Head of caudate nucleus (tissue), 42 donors: ENCODE measurements at regions of chrX and their contacts with region 1.

Region 1: DNA sequence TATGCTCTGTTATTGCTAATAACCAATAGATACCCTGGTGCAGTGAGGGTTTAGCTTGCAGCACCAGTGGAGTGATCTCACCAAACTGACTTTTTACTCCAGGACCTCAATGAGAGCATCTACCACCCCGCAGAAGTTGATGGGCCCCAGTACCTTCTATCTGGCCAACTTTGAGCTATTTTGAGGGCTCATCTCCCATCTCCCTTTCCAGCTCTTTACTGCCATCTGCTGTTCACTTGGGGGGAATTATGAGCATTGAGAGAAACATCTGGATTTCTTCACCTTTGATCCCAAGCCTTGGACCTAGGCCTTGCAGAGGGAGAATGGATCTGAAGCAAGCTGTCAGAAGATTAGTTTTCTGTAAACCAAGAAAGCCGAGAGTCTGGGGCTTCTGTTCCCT is 143.6 kb downstream of the TMEM164 start:
- DNase-seq: peak in 20 of 42 donors; percentile 15 to 73 (median 39)

Region 2: DNA sequence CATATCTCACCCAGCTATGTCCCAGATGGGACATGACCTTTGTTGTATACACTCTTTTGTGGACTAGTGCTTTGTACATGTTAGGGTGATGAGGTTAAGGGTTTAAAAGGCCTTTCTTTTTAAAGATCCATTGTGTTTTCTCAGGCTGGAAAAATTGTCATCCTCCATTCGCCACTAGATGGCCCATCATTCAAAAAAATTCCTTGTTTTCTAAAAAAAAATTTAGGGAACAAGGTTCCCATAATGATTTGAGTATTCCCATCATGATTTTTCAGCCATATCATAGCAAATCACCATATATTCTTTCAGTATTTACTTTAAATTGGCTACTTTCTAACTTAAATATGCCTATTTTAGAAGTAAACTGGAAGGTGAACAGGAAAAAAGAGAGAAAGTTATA is 235.5 kb before region 1 on chrX:
- intact Hi-C with region 1: loop called (anchors 5 kb)
- DNase-seq: no peak

Region 3: GRCh38 chrX:109990582-109991276 is 155.8 kb before region 1 on chrX:
- intact Hi-C with region 1: no loop called
- DNase-seq: no peak

Region 4: DNA sequence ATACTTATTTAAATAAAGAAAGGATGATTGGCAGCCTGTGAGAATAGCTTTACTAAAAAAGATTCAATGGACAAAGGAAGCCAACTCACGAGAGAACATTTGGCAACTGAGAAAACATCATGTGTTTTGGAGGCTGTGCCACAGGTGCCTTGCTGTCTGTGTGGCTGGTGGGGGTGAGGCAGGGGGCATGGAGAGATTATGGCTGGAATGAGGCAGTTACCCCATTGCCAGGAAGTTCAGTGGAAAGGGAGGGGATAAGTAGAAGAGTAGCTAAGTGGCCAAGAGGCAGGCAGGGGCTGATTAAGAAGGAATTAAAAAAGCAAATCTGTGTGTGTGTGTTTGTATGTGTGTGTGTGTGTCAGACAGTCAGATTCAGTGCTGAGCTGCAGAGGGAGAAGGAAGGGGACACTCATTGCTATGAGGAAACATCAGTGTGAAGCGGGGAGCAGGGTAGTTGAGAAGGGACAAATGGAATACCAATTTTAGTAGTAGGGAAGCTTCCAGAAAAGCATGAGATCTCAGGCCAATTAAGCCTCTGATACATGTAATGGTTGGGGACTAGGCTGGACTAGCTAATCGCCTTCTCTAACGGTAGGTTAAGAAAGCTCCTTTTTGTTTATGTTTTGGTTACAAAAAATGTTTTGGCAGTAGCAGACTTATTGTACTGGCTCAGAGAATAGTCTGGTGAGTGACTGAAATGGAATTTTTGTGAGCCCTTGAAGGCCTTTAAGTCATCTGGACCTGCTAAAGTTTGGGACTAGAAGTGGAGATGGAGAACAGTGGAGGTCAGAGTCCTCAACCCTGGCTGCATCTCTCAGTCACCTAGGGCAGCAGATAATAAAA is 125.1 kb before region 1 on chrX:
- intact Hi-C with region 1: no loop called
- DNase-seq: no peak